PC-9 (cell line): ENCODE measurements at regions of chr12 and their contacts with region 1.

Region 1: DNA sequence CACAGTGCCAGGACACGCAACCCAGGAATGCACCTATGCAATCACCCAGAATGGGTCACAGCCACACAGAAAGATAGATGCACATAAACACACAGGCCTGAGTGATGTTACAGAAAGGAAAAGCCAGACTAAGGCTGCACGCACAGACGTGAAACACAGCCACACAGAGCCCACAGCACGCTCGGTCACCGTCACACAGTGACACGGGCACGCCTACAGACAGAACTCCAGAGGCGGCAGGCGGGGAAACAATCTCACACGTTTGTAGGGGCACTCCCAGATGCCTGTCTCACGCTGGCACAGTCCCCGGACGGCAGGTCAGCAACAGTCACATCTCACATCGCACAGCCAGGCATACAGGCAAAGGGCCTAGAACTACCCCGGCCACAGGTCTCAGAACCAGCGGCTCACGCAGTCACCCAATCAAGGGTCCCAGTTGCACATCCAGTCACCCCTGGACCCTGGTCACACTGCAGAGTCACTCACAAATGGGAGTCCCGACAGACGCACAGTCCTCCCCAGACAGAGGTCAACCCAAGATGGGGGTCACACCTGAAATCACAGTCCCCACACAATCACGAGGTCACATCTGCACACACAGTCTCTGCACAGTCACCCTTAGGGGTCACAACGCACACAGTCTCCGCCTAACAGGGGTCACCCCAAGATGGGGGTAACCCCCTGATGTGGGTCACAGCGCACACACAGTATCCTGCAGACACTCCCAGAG is 790 bp downstream of the SSH1 start:
- DNase-seq: peak; percentile 55 to 65
- H3K4me3 ChIP-seq: peak overlapping the region; percentile 98
- H3K27ac ChIP-seq: peak overlapping the region; percentile 92
- H3K4me1 ChIP-seq: peaks cover 41% of the 10 kb centered on the region
- H3K27me3 ChIP-seq: no peaks in the 10 kb centered on the region
- CTCF ChIP-seq: no peak

Region 2: GRCh38 chr12:108180255-108181094 is 676.1 kb before region 1 on chr12:
- CTCF ChIA-PET with region 1: no interaction called
- POLR2A ChIA-PET with region 1: no interaction called
- intact Hi-C with region 1: no loop called
- DNase-seq: no peak
- H3K4me3 ChIP-seq: no peak overlapping the region
- H3K27ac ChIP-seq: no peak overlapping the region
- H3K4me1 ChIP-seq: no peaks in the 10 kb centered on the region
- H3K27me3 ChIP-seq: peaks cover 41% of the 10 kb centered on the region
- CTCF ChIP-seq: no peak

Region 3: DNA sequence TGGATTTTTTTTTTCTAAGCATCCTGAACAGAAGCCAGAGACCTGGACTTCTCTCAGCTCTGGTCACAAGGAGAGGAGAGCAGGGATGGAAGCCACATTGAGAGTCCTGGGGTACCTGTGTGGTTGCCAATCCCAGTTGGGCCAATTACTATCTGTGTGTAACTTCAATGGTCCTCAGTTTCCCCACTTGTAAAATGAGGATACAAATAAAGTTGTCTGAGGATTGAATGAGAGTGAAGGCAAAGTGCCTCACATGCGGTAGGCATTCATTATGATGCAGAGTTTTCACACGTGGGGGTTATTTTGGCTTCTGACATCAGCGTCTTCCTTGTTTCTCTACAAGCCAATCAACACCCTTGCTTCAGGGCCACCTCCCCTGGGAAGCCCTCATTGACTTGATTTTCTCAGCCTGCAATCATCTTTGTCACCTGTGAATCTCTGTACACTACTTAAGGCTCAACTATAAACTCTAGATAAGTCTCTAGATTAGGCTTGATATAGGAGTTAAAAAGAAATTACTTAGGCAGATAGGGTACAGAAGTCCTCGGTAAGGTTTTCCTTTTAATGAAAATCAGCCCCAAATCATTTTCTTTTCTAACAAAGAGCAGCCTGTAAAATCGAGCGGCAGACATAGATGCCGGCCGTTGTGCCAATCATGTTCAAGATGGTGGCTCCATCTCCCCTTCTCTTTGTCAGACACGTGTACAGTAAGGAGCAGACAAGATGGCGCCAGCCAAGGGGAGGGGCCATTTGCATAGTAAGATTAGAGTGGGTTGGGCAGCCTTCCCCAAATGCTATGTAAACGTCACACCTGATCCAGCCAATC is 379.3 kb before region 1 on chr12:
- CTCF ChIA-PET with region 1: no interaction called
- POLR2A ChIA-PET with region 1: no interaction called
- intact Hi-C with region 1: no loop called
- DNase-seq: no peak
- H3K4me3 ChIP-seq: no peak overlapping the region
- H3K27ac ChIP-seq: no peak overlapping the region
- H3K4me1 ChIP-seq: no peaks in the 10 kb centered on the region
- H3K27me3 ChIP-seq: peaks cover 74% of the 10 kb centered on the region
- CTCF ChIP-seq: no peak

Region 4: GRCh38 chr12:108691175-108691997 is 165.2 kb before region 1 on chr12:
- CTCF ChIA-PET with region 1: no interaction called
- POLR2A ChIA-PET with region 1: no interaction called
- intact Hi-C with region 1: loop called (anchors 1 kb)
- DNase-seq: peak; percentile 89 to 97
- H3K4me3 ChIP-seq: peak overlapping the region; percentile 36; the same call in 1 of the 2 replicates
- H3K27ac ChIP-seq: peak overlapping the region; percentile 84
- H3K4me1 ChIP-seq: peaks cover 47% of the 10 kb centered on the region
- H3K27me3 ChIP-seq: no peaks in the 10 kb centered on the region
- CTCF ChIP-seq: peak; percentile 44; the same call in 1 of the 2 replicates

Region 5: DNA sequence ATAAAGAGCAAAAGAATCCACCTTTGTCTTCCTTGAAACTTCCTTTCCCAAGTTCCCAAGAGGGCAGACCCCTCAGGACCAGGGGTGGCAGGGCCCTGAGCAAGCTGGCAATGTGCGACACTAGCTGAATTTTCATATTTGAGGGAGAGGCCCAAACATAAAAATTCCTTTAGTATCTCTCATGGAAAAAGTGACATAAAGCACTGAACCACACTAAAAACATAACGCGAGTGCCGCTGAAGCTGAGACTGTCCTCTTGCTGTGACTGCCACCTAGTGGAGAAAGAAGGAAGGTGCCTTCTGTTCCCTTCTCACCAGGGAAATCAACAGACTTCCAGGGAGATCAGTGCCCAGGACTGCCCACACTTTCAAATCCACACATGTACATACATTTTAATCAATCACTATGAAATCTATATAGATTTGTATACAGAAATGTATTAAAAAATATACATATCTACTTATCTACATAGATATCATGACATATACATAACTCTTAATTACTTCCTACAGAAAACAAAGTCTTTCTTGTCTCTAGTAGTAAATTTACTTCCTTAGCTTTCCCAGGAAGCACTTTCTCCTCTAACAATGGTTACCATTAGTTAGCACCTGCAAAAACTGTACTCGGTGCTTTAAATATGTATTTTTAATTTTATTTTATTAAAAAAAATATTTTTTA is 53.0 kb before region 1 on chr12:
- CTCF ChIA-PET with region 1: no interaction called
- POLR2A ChIA-PET with region 1: no interaction called
- intact Hi-C with region 1: loop called (anchors 1 kb)
- DNase-seq: peak; percentile 58 to 65
- H3K4me3 ChIP-seq: no peak overlapping the region
- H3K27ac ChIP-seq: no peak overlapping the region
- H3K4me1 ChIP-seq: no peaks in the 10 kb centered on the region
- H3K27me3 ChIP-seq: no peaks in the 10 kb centered on the region
- CTCF ChIP-seq: peak; percentile 94

Region 6: GRCh38 chr12:108838194-108839017 is 18.2 kb before region 1 on chr12:
- CTCF ChIA-PET with region 1: interaction called, 4 read pairs
- POLR2A ChIA-PET with region 1: interaction called, 7 read pairs
- intact Hi-C with region 1: loop called (anchors 1 kb)
- DNase-seq: peak; percentile 93 to 98
- H3K4me3 ChIP-seq: peak overlapping the region; percentile 22; the same call in 1 of the 2 replicates
- H3K27ac ChIP-seq: peak overlapping the region; percentile 92
- H3K4me1 ChIP-seq: peaks cover 44% of the 10 kb centered on the region
- H3K27me3 ChIP-seq: no peaks in the 10 kb centered on the region
- CTCF ChIP-seq: no peak

Region 7: DNA sequence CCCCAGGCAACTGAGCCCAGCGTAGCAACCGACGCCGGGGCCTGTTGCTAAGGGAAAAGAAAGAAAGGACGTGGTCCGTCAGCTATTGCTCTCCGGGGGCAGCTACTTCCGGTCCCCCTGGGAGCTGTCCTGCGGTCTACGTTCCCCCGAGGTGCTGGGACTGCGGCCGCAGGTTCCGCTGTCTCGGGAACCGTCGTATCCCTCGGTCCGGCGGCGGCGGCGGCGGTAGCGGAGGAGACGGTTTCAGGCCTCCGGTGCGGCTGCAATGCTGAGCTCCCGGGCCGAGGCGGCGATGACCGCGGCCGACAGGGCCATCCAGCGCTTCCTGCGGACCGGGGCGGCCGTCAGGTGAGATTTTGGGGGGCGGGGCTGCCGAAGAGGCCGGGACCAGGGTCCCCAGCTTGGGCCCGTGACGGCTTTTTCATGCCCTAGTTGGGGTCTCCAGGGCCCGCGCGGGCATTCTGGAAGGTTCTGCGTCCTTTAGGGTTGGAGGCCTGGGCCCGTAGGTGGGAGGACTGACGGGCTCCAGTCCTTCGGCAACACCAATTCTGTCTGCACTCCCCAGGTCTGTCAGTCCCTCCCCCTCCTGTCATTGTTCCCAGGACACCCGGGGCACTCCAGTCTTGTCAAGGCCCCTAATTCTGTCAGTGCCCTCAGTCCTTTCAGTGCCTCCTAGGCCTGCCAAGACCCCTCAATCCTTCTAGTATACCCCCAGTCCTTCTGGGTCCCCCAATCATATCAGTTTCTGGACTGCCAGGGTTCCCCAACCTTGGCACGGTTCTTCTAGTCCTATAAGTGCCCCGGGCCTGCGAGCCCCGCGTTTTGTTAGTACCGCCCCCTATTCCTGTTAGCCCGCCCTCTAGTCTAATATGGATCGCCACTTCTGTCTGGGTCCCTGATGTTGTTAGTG is 196.1 kb after region 1 on chr12 and contains the start of gene USP30:
- CTCF ChIA-PET with region 1: no interaction called
- POLR2A ChIA-PET with region 1: no interaction called
- intact Hi-C with region 1: loop called (anchors 5 kb)
- DNase-seq: peak; percentile 71 to 76
- H3K4me3 ChIP-seq: peak within 1 kb of the TSS; percentile 79
- H3K27ac ChIP-seq: no peak within 1 kb of the TSS
- H3K4me1 ChIP-seq: peaks cover 11% of the 10 kb centered on the region; the same call in 1 of the 2 replicates
- H3K27me3 ChIP-seq: no peaks in the 10 kb centered on the region
- CTCF ChIP-seq: no peak
- total RNA-seq, gene USP30: 12.0 and 12.5 TPM in 2 replicates